ENCODE measurements at regions of chr22 and their contacts with region 1.

Region 1: GRCh38 chr22:49930739-49931412 is 12.4 kb downstream of the CRELD2 start:
- DNase-seq: peak; percentile 87
- H3K4me3 Mint-ChIP-seq: peak overlapping the region; percentile 27
- H3K27ac Mint-ChIP-seq: peak overlapping the region; percentile 67
- H3K4me1 Mint-ChIP-seq: peaks cover 46% of the 10 kb centered on the region
- H3K27me3 Mint-ChIP-seq: no peaks in the 10 kb centered on the region

Region 2: DNA sequence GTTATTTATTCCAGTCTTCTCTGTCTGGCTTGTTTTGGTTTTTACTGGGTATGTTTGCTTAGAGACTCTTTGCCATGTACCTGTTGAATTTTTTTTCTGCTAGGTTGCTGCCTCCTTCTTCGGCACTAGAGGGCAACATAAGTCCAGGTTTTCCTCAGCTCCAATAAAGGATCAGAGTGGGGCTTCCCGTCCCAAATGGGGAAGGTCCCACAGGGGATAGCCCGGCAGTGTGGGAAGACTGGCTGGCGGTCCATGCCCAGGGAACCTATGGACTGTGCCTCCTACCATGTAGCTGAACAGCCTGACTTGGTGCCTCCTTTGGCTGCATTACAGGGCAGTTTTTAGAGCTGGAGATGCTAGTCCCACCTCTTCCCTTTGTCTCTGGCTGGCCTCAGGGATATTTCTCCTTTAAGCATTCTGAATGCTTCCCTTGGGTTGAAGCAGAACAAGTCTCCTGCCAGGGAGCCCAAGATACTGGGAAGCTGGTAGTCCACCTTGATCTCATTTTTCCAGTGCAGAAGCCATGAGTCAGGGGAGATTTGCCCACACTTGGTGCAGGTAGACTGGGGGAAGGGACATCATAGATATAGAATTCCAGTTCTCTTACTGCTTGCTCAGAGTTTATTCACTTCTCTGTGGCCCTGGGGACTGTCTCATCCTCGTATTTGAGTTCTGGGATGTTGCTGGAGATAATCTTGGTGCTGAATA is 163.4 kb before region 1 on chr22:
- CTCF ChIA-PET with region 1: interaction called, 12 read pairs
- intact Hi-C with region 1: loop called (anchors 2 kb)
- DNase-seq: peak; percentile 61
- H3K4me3 Mint-ChIP-seq: no peak overlapping the region
- H3K27ac Mint-ChIP-seq: no peak overlapping the region
- H3K4me1 Mint-ChIP-seq: peaks cover 6% of the 10 kb centered on the region
- H3K27me3 Mint-ChIP-seq: no peaks in the 10 kb centered on the region

Region 3: DNA sequence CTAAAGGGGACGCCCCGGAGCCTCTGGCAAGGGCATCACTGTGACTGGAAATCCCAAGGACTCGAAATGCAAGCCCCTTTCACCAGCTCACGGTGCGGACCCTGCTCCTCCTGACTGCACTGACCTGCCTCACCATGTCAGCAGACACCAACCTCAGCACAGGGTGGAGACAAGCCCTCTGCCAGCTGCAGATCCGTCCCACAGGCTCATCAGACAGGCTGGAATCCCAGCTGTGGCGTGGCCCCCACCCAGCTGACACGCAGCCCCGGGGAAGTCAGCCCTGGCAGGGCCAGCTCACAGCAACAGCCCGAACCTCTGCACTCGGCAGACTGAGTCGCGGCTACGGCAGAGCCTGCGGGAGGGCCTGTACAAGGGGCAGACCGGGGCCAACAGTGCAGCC is 140.0 kb before region 1 on chr22:
- CTCF ChIA-PET with region 1: no interaction called
- intact Hi-C with region 1: no loop called
- DNase-seq: no peak
- H3K4me3 Mint-ChIP-seq: peak overlapping the region; percentile 42
- H3K27ac Mint-ChIP-seq: peak overlapping the region; percentile 53
- H3K4me1 Mint-ChIP-seq: peaks cover 40% of the 10 kb centered on the region
- H3K27me3 Mint-ChIP-seq: no peaks in the 10 kb centered on the region

Region 4: DNA sequence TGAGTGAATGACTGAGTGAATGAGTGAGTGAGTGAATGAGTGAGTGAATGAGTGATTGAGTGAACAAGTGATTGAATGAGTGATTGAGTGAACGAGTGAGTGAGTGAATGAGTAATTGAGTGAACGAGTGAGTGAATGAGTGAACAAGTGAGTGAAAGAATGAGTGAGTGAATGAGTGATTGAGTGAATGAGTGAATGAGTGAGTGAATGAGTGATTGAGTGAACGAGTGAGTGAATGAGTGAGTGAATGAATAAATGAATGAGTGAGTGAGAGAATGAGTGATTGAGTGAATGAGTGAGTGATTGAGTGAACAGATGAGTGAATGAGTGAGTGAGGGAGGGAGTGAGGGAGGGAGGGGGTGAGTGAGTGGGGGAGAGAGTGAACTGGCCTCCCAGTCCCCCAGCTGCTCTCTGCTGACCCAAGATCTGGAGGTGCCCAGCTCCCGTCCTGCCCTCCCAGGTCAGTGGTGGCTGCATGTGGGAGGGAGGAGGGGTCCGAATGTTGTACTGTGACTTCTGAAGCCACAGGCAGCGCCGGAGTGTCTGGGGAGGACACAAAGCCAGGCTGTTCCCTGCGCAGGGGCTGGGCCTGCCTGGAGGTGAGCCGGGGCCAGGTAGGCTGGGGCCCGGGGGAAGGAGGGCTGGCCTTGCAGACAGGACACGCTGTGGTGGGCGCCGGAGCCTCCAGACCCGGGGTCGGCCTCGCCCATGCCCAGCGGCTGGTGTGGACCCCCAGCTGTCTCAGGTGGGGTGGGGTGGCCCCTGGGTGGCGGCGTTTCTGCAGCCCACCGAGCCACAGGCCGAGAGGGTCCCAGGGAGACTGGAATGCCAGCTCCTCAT is 11.9 kb after region 1 on chr22:
- CTCF ChIA-PET with region 1: no interaction called
- intact Hi-C with region 1: no loop called
- DNase-seq: peak; percentile 20
- H3K4me3 Mint-ChIP-seq: no peak overlapping the region
- H3K27ac Mint-ChIP-seq: no peak overlapping the region
- H3K4me1 Mint-ChIP-seq: peaks cover 11% of the 10 kb centered on the region
- H3K27me3 Mint-ChIP-seq: no peaks in the 10 kb centered on the region

Region 5: DNA sequence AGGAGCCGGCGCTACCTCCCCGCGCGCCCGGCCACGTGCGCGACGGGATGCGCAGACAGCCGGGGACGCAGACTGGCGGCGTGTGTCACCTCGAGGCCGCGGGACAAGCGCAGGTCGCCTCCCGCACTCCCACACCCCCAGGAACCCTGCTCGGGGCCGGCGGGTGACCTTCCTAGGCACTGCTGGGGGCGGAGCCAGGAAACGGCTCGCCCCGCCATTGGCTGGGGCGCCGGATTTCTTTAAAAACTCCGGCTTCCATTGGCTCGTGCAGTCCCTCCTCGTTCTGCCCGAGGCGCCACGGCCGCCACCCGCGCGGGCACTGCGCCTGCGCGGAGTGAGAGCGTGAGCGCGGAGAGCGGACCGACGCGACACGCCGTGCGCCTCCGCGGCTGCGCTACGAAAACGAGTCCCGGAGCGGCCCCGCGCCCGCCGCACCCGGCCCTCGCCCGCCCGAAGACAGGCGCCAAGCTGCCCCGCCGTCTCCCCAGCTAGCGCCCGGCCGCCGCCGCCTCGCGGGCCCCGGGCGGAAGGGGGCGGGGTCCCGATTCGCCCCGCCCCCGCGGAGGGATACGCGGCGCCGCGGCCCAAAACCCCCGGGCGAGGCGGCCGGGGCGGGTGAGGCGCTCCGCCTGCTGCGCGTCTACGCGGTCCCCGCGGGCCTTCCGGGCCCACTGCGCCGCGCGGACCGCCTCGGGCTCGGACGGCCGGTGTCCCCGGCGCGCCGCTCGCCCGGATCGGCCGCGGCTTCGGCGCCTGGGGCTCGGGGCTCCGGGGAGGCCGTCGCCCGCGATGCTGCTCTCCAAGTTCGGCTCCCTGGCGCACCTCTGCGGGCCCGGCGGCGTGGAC is 29.5 kb after region 1 on chr22 and contains the start of gene PIM3:
- CTCF ChIA-PET with region 1: interaction called, 4 read pairs
- intact Hi-C with region 1: loop called (anchors 1 kb)
- DNase-seq: peak; percentile 94
- H3K4me3 Mint-ChIP-seq: peak within 1 kb of the TSS; percentile 91
- H3K27ac Mint-ChIP-seq: peak within 1 kb of the TSS; percentile 94
- H3K4me1 Mint-ChIP-seq: peaks cover 23% of the 10 kb centered on the region
- H3K27me3 Mint-ChIP-seq: no peaks in the 10 kb centered on the region
- total RNA-seq, gene PIM3: 202 to 210 TPM

Region 6: GRCh38 chr22:50030297-50031188 is 99.7 kb after region 1 on chr22:
- CTCF ChIA-PET with region 1: interaction called, 36 read pairs
- intact Hi-C with region 1: loop called (anchors 1 kb)
- DNase-seq: peak; percentile 93
- H3K4me3 Mint-ChIP-seq: no peak overlapping the region
- H3K27ac Mint-ChIP-seq: no peak overlapping the region
- H3K4me1 Mint-ChIP-seq: peaks cover 13% of the 10 kb centered on the region
- H3K27me3 Mint-ChIP-seq: peaks cover 21% of the 10 kb centered on the region

Region 7: DNA sequence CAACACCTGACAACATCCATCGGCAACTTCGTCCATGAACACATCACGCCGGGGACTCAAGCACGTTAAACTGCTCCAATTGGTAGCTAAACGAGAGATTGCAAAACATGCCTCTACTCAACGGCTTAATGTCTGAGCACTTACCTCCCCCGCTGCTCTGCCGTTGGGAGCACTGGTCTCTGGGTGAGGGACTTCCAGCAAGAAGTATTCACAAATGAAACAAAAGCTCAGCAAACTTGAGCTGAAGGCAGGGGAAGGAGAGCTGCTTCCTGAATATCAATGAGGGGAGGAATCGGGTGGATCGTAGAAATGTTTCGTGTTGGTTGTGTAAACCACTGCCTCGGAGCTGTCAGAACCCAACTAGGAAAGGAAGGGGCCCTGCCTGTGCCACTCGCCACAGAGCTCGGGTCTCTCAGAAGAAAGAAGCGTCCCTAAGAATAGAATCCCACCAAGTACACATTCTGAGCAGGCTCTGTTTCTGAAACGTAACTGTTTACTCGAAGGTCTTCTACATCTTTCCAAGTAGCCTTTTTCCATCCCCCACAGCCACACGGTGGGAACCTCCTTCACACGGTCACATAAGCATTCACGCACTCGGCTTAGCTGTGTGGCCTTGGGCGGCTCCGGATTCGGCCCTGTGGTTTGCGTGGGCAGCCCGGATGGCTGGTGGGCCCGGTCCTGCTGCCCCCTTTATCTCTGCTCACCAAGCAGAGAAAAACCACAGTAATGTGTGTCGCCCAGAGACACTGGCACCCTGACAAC is 154.5 kb after region 1 on chr22 and contains the start of gene MLC1:
- CTCF ChIA-PET with region 1: no interaction called
- intact Hi-C with region 1: no loop called
- DNase-seq: peak; percentile 52
- H3K4me3 Mint-ChIP-seq: peak within 1 kb of the TSS; percentile 40
- H3K27ac Mint-ChIP-seq: no peak within 1 kb of the TSS
- H3K4me1 Mint-ChIP-seq: peaks cover 13% of the 10 kb centered on the region
- H3K27me3 Mint-ChIP-seq: peaks cover 31% of the 10 kb centered on the region
- total RNA-seq, gene MLC1: 0.05 TPM in 1 of 2 experiments, not detected in the other

Region 8: DNA sequence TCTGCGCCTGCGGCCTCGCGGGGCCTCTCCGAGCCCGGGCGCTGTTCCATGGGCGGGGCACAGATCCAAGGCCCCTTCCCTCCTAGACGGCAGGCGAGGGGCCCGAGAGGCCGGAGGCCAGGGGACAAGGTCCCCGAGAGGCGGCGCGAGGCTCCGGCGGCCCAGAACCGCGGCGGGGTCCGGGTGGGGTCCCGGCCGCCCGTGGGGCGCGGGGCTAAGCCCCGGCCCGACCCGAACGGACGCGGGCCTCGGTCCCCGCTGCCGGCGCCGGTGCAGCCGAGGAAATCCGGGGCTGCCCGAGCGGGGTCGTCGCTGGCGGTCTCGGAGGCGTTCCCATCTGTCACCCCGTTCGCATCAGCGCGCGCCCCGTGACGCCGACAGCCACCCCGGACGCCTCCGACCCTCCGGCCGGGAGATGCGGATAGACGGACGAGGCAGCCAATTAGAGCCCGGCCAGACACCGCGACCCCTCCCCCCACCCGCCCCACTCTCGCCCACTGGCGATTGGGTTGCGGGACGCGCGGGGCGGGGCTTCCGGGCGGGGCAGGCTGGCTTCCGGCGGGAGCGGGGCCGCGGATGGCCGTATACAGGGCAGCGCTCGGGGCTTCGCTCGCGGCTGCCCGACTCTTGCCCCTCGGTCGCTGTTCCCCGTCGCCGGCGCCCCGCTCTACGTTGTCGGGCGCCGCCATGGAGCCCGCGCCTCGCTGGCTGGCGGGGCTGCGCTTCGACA is 269.8 kb after region 1 on chr22 and contains the start of gene SELENOO:
- CTCF ChIA-PET with region 1: no interaction called
- intact Hi-C with region 1: loop called (anchors 5 kb)
- DNase-seq: peak; percentile 92
- H3K4me3 Mint-ChIP-seq: peak within 1 kb of the TSS; percentile 77
- H3K27ac Mint-ChIP-seq: no peak within 1 kb of the TSS
- H3K4me1 Mint-ChIP-seq: peaks cover 22% of the 10 kb centered on the region
- H3K27me3 Mint-ChIP-seq: no peaks in the 10 kb centered on the region
- total RNA-seq, gene SELENOO: 16.5 to 16.7 TPM

Region 9: DNA sequence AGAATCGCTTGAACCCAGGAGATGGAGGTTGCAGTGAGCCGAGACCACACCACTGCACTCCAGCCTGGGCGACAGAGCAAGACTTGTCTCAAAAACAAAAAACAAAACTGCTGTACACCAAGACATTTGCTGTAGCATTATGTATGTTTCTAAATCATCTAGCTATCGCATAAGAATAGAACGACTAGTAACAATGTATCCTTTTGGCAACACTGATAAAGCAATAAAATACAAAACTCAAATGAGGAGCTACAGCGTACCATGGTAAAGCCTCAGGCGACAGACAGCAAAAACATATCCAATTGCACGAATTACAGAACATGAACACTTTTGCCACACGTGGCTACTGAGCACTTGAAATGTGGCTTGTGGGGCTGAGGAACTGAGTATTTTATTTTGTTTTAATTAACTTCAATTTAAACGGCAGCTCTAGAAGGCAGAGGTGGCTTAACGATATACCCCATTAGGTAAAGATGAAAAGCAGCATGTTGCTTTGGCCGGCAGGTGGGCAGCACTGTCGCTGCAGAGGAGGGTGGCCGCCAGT is 311.6 kb after region 1 on chr22:
- CTCF ChIA-PET with region 1: no interaction called
- intact Hi-C with region 1: no loop called
- DNase-seq: no peak
- H3K4me3 Mint-ChIP-seq: peak overlapping the region; percentile 99
- H3K27ac Mint-ChIP-seq: peak overlapping the region; percentile 36
- H3K4me1 Mint-ChIP-seq: peaks cover 46% of the 10 kb centered on the region
- H3K27me3 Mint-ChIP-seq: no peaks in the 10 kb centered on the region

Measured in activated naive CD4-positive, alpha-beta T cell treated with anti-CD3 and anti-CD28 coated beads for 36 hours (primary cell).